GM10248 (cell line): ENCODE measurements at regions of chr7 and their contacts with region 1.

Region 1: GRCh38 chr7:35749556-35749955 is 51.3 kb upstream of the SEPTIN7 start:
- DNase-seq: no peak
- CTCF ChIP-seq: no peak

Region 2: DNA sequence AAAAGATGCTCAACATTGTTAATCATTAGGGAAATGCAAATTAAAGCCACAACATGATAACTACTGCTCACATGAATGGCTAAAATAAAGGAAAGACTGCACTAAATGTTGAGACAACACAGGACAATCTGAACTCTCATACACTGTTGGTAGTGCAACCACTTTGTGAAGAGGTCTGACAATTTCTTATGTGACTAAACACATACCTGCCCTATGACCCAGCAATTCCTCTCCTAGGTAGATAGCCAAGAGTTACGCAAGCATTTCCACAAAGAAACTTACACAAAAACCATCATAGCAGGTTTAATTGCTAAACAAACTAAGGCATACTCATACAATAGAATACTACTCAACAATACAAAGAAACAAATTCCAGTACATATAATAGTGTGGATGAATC is 12.8 kb before region 1 on chr7:
- CTCF ChIA-PET with region 1: interaction called, 10 read pairs
- POLR2A ChIA-PET with region 1: no interaction called
- DNase-seq: no peak
- CTCF ChIP-seq: no peak

Region 3: DNA sequence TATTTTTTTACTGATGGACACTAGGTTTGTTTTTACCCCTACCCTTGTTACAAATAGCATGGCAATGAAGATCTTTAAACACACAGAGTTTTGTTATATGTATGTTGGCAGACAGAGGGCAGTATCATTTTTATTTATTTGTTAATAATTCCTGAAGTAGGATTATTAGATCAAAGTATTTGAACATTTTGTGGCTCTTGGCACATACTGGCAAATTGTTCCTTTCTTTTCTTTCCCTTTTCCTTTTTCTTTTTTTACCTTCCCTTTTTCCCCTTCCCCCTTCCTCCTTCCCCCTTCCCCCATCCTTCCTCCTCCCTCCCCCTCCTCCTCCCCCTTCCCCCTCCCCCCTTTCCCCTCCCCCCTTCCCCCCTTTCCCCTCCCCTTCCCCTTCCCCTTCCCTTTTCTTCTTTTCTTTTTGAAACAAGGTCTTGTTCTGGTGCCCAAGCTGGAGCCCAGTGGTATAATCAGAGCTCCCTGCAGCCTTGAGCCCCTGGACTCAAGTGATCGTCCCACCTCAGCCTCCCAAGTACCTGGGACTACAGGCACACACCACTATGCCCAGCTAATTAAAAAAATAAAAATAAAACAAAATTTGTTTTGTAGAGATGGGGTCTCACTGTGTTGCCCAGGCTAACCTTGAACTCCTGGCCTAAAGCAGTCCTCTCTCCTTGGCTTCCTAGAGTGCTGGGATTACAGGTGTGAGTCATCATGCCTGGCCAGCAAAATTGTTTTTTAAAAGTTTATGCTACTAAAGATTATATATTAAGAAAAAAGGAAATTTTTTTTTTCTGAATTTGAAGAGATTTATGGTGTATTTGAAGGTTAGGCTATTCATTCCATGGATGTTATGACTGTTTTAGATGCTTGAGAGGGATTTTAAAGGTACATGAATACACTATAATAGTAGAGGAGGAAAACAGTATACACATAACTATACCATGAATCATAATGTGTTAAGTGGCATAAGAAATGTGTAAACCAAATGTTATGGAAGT is 90.6 kb after region 1 on chr7:
- CTCF ChIA-PET with region 1: no interaction called
- POLR2A ChIA-PET with region 1: no interaction called
- DNase-seq: no peak
- CTCF ChIP-seq: no peak

Region 4: GRCh38 chr7:36062154-36062815 is 312.7 kb after region 1 on chr7:
- CTCF ChIA-PET with region 1: no interaction called
- POLR2A ChIA-PET with region 1: no interaction called
- DNase-seq: no peak
- CTCF ChIP-seq: no peak

Region 5: GRCh38 chr7:36496576-36496975 is 747.0 kb after region 1 on chr7:
- CTCF ChIA-PET with region 1: no interaction called
- POLR2A ChIA-PET with region 1: no interaction called
- DNase-seq: no peak
- CTCF ChIP-seq: no peak